Transverse colon (tissue), 4 donors: ENCODE measurements at regions of chr13 and their contacts with region 1.

Region 1: DNA sequence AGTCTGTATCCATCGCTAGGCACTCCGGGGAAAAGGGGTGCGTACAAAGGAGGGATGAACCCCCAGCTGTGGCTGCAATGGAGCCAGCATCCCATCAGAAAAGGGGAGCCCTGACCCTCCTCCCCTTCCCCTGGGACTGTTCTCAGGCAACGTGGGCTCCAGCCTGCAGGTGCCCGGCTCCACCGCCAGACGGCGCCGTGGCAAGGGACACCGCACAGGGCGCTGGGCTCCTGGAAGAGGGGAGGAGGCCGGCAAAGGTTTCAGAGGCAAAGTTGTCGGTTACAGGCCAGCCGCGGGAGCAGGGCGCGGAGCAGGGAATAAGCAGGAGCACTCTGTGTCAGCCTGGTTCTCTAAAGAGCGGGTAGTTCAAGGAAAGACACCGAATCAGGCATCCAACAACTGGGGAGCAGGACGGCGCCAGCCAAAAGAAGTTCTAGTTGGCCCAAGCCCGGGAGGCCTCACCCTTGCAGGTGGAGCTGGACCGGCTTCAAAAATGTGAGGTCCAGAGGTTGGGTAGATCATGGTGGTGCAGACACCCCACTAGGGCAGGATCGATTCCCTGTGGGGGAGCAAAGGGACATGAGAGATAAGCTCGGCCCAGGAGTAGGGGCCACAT is 53.0 kb upstream of the ATP12A start:
- DNase-seq: no peak
- H3K4me3 ChIP-seq: no peak overlapping the region
- H3K27ac ChIP-seq: peak overlapping the region in 1 of 4 donors; percentile 3
- H3K4me1 ChIP-seq: peaks cover 0 to 39% (median 16%) of the 10 kb centered on the region in 4 donors
- H3K27me3 ChIP-seq: no peaks in the 10 kb centered on the region
- CTCF ChIP-seq: peak; percentile 5 to 91 (median 72)
- EP300 ChIP-seq: no peak
- POLR2A ChIP-seq: no peak

Region 2: DNA sequence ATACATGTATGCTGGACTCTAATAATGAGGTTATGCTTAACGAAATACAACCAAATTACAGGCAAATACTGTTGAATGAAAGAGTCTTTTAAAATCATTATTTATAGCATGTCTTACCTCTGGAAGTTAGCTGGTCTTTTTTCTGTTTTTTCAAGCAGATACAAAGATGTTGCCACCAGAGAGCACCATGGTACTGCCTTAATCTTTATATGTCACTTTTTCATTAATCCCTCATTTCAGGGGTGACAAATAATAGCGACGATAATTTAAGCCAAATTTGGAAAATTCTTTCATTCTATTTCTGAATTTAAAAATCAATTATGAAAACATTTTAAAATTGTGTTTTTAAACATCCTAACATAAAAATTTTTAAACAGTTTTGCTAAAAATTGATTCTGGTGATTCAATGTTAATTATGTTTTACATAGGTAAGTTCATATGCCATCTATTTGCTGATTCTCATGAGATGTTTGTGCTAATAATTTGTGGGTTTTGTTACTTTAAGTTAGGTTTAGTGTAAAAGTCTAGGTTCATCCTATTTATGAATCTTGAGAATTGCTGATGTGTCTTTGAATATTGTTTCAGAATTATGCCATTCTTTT is 1825.7 kb before region 1 on chr13:
- in situ Hi-C with region 1: no loop called
- intact Hi-C with region 1: no loop called
- DNase-seq: no peak
- H3K4me3 ChIP-seq: no peak overlapping the region
- H3K27ac ChIP-seq: no peak overlapping the region
- H3K4me1 ChIP-seq: no peaks in the 10 kb centered on the region
- H3K27me3 ChIP-seq: peaks cover 3% of the 10 kb centered on the region
- CTCF ChIP-seq: peak in 4 of 5 experiments; percentile 24 to 28 (median 28)
- EP300 ChIP-seq: no peak
- POLR2A ChIP-seq: no peak

Region 3: GRCh38 chr13:24671386-24672107 is 44.3 kb after region 1 on chr13:
- in situ Hi-C with region 1: loop called in 1 of 4 experiments (anchors 10 kb)
- intact Hi-C with region 1: no loop called
- DNase-seq: peak; percentile 50
- H3K4me3 ChIP-seq: peak overlapping the region in 1 of 4 donors; percentile 14
- H3K27ac ChIP-seq: peak overlapping the region; percentile 71 to 79 (median 76)
- H3K4me1 ChIP-seq: peaks cover 5 to 36% (median 19%) of the 10 kb centered on the region in 4 donors
- H3K27me3 ChIP-seq: no peaks in the 10 kb centered on the region
- CTCF ChIP-seq: peak; percentile 52 to 72 (median 65)
- EP300 ChIP-seq: no peak
- POLR2A ChIP-seq: no peak

Region 4: DNA sequence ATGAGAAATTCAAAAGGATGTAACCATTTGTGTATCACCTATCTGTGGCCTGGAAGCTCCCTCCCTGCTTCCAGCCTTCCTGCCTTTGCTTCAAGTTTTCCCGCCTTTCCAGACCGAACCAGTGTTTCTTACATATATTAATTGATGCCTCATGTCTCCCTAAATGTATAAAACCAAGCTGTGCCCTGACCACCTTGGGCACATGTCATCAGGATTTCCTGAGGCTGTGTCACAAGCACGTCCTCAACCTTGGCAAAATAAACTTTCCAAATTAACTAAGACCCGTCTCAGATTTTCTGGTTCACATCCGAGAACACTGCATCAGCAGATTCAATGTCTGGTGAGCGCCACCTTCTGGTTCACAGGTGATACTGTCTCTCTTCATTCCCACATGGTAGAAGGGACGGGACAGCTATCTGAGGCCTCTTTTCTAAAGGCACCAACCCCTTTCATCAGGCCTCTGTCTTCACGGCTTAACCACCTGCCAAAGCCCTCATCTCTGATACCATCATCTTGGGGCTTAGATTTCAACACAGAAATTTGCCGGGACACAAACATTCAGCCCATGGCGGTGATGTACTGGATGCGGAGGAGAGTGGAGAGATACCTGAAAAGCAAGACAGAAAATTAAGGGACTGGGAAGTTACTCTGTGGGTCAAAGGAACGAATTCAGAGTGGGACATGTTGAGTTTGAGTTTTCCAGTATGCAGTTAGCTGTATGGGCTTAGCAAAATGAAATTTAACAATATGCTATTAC is 410.0 kb after region 1 on chr13:
- in situ Hi-C with region 1: no loop called
- intact Hi-C with region 1: no loop called
- DNase-seq: peak; percentile 47
- H3K4me3 ChIP-seq: no peak overlapping the region
- H3K27ac ChIP-seq: no peak overlapping the region
- H3K4me1 ChIP-seq: no peaks in the 10 kb centered on the region
- H3K27me3 ChIP-seq: peaks cover 54% of the 10 kb centered on the region
- CTCF ChIP-seq: peak; percentile 73 to 81 (median 74)
- EP300 ChIP-seq: no peak
- POLR2A ChIP-seq: no peak

Region 5: GRCh38 chr13:26202365-26202972 is 1575.3 kb after region 1 on chr13:
- in situ Hi-C with region 1: no loop called
- intact Hi-C with region 1: no loop called
- DNase-seq: no peak
- H3K4me3 ChIP-seq: no peak overlapping the region
- H3K27ac ChIP-seq: no peak overlapping the region
- H3K4me1 ChIP-seq: no peaks in the 10 kb centered on the region
- H3K27me3 ChIP-seq: no peaks in the 10 kb centered on the region
- CTCF ChIP-seq: no peak
- EP300 ChIP-seq: no peak
- POLR2A ChIP-seq: no peak